ENCODE measurements at regions of chr20 and their contacts with region 1.

Region 1: GRCh38 chr20:8389381-8390036 is 257.4 kb downstream of the PLCB1 start:
- DNase-seq: peak in 2 of 5 donors; percentile 70 to 78
- H3K4me3 ChIP-seq: no peak overlapping the region
- H3K27ac ChIP-seq: no peak overlapping the region
- H3K4me1 ChIP-seq: peaks cover 0 to 5% (median 0%) of the 10 kb centered on the region in 3 donors
- H3K27me3 ChIP-seq: no peaks in the 10 kb centered on the region
- CTCF ChIP-seq: peak; percentile 52

Region 2: DNA sequence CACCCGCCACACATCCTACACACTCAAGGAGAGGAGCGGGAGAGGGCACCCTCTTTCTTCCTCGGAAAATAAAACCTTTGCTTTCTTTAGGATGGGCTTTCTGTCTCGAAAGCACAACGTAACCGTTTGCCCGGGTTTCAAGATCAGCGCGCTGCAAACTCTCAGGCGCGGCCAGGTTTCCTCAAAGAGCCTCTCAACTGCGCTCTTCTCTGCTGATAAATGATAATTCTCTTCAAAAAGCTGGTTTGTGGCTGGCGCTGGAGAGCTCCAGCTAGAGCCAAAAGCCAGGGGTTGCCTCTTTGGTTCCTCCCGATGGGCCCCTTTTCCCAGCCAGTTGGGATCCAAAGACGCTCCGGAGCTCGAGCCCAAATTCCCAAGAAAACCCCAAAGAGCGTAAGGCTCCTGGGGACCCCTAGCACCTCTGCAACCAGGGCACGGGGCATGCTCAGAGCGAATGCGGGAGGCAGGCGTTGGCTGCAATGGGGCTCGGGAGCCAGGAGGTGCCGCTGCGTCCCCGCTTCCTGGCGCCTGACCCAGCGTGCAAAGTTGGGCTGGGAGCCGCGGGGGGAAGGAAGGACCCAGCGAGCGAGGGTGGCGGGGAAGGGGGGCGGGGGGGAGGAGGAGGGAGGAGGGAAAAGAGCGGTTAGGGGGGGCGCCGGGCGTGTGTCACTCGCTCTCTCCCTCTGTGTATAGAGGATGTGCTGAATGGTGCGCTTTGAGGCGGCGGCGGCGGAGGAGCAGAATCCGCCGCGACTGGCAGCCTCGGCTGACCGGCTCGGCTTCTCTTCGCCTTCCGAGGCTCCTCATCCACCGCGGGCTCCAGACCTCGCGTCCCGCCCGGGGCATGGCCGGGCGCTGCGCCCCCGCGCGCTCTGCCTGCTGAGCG is 257.7 kb before region 1 on chr20 and contains the start of gene PLCB1:
- intact Hi-C with region 1: loop called (anchors 10 kb)
- DNase-seq: peak; percentile 93 to 96 (median 93)
- H3K4me3 ChIP-seq: peak within 1 kb of the TSS; percentile 39 to 71 (median 60)
- H3K27ac ChIP-seq: peak within 1 kb of the TSS in 1 of 2 donors; percentile 35
- H3K4me1 ChIP-seq: no peaks in the 10 kb centered on the region
- H3K27me3 ChIP-seq: no peaks in the 10 kb centered on the region
- CTCF ChIP-seq: peak; percentile 95
- total RNA-seq, gene PLCB1: 107 TPM